ENCODE measurements at regions of chr19 and their contacts with region 1.

Region 1: DNA sequence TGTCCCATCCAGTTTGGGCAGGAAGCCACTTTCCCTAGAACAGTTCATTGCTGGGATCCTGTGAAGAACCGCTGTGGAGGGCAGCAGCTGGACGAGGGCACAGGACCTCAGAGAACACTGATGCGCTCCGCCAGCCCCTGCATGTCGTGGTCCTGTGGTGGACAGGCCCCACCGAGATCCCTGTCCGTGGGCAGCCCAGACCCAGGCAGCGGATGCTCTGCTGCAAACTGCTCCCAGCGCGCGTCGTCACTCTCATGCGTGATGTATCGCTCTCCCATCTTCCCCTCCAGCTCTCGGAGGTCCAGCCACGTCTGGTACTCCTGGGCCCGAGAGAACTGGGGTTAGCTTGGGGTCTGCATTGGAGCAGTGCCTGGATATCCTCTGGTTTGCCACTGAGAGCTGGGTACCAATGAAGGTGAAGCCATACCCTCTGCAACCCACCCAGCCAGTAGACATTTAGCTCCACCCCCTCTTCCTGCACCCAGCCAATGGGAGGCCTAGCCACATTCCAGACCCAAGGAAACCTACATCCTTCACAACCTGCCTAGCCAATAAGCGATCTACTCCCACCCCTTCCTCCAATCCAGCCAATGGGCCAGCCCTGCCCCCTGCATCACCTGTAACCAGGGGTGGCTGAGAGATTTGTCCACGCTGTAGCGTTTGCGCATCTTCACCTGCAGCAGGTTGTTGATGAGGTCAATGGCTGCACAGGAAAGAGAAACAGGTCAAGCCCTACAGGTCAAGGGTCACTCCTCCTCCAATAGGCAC is 13.6 kb upstream of the DACT3 start:
- DNase-seq: no peak
- ATAC-seq: peak; percentile 30
- H3K4me3 ChIP-seq: no peak overlapping the region
- H3K27ac ChIP-seq: no peak overlapping the region
- H3K4me1 ChIP-seq: no peaks in the 10 kb centered on the region
- H3K27me3 ChIP-seq: no peaks in the 10 kb centered on the region
- CTCF ChIP-seq: no peak

Region 2: DNA sequence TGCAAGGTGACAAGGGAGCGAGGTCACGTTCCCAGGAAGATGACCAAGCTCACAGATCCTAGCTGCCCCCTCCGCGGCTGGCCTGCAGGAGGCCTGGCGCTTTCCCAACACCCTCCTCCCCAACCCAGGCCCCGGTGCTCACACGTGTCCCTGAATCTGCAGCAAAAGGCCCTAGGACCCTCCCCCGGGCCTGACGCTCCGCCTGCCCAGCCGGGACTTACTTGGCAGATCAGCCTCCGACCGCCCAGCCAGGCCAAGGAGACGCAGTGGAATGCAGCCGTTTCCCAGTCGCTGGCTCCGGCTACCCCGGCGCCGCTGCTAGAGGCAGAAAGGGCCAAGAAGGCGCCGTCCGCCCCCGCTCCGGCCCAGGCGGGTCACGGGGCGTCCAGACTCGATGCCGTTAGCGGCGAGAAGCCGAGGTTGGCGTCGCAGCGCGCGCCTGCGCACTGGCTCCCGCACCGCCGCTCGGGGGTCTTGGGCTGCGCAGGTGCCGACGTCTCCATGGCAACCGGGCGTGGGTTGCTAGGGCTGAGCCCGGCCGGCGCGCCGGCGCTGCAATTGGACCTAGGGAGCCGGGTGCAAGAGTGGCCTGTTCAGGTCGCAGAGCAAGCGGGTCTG is 203.4 kb before region 1 on chr19 and contains the start of gene PNMA8A:
- intact Hi-C with region 1: no loop called
- DNase-seq: peak; percentile 79
- ATAC-seq: peak; percentile 69
- H3K4me3 ChIP-seq: peak within 1 kb of the TSS; percentile 39
- H3K27ac ChIP-seq: peak within 1 kb of the TSS; percentile 55
- H3K4me1 ChIP-seq: peaks cover 14% of the 10 kb centered on the region
- H3K27me3 ChIP-seq: peaks cover 6% of the 10 kb centered on the region
- CTCF ChIP-seq: no peak
- total RNA-seq, gene PNMA8A: 1.8 TPM

Region 3: GRCh38 chr19:46607448-46607841 is 67.2 kb before region 1 on chr19:
- intact Hi-C with region 1: loop called (anchors 5 kb)
- DNase-seq: peak; percentile 58
- ATAC-seq: no peak
- H3K4me3 ChIP-seq: no peak overlapping the region
- H3K27ac ChIP-seq: no peak overlapping the region
- H3K4me1 ChIP-seq: peaks cover 22% of the 10 kb centered on the region
- H3K27me3 ChIP-seq: no peaks in the 10 kb centered on the region
- CTCF ChIP-seq: no peak

Region 4: DNA sequence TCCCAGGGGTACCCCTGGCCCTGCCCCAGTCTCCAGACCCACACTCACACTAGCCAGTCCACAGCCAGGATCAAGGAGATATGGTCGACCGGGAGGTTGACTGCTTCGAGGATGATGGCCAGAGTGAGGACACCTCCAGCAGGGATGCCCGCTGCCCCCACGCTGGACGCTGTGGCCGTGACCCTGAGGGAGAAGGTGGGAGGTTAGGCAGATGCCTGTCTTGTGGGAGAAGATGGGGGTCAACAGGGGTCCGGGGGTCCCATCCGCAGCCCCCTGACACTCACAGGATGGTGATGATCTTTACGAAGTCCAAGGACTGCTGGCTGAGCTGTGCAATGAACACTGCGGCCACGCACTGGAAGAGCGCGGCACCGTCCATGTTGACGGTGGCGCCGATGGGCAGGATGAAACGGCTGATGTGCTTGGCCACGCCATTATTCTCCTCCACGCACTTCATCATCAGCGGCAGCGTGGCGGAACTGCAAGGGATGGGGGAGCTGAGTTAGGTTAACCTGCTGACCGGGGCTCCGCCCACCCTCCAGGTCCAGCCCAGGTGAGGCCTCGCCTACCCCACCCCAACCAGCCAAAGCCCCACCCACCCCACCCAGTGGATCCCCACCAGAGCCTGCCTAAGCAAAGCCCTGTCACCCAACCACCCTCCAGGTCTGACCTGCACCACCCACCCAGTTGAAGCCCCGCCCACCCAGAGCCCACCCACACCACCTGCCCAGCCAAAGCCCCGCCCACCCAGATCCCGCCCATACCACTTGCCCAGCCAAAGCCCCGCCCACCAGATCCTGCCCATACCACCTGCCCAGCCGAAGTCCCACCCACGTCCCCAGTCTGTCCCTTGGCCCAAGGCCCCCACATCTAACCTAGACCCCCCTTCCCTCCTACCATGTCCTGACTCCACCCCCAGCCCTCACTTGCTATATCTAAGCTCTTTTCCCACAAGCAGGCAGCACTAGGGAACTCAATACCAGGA is 102.6 kb after region 1 on chr19:
- intact Hi-C with region 1: no loop called
- DNase-seq: no peak
- ATAC-seq: no peak
- H3K4me3 ChIP-seq: no peak overlapping the region
- H3K27ac ChIP-seq: no peak overlapping the region
- H3K4me1 ChIP-seq: peaks cover 4% of the 10 kb centered on the region
- H3K27me3 ChIP-seq: no peaks in the 10 kb centered on the region
- CTCF ChIP-seq: no peak